CD8-positive, alpha-beta T cell (primary cell): ENCODE measurements at regions of chr1 and their contacts with region 1.

Region 1: DNA sequence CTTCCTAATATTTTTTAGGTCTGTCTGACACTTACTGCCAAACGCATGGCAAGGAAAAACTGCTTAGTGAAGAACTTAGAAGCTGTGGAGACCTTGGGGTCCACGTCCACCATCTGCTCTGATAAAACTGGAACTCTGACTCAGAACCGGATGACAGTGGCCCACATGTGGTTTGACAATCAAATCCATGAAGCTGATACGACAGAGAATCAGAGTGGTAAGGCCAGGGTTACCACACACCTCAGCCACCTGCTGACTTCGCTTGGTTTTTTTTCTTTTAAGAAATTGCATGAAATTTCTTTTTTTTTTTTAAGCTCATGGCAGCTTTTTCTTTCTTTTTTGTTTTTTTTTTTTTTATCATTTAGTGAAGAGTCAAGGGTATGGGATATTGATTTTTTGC is 17.2 kb downstream of the ATP1A1 start:
- DNase-seq: peak in 6 of 9 experiments; percentile 14 to 83 (median 49)
- ATAC-seq: peak; percentile 87
- H3K4me3 ChIP-seq: no peak overlapping the region
- H3K4me3 Mint-ChIP-seq: no peak overlapping the region
- H3K27ac ChIP-seq: peak overlapping the region in 1 of 2 experiments; percentile 34
- H3K27ac Mint-ChIP-seq: peak overlapping the region; percentile 72
- H3K4me1 ChIP-seq: peaks cover 13% of the 10 kb centered on the region
- H3K4me1 Mint-ChIP-seq: peaks cover 61% of the 10 kb centered on the region
- H3K27me3 ChIP-seq: no peaks in the 10 kb centered on the region
- H3K27me3 Mint-ChIP-seq: no peaks in the 10 kb centered on the region
- CTCF ChIP-seq: no peak

Region 2: GRCh38 chr1:116092752-116093482 is 297.3 kb before region 1 on chr1:
- CTCF ChIA-PET with region 1: no interaction called
- POLR2A ChIA-PET with region 1: no interaction called
- intact Hi-C with region 1: no loop called
- DNase-seq: no peak
- ATAC-seq: no peak
- H3K4me3 ChIP-seq: no peak overlapping the region
- H3K4me3 Mint-ChIP-seq: no peak overlapping the region
- H3K27ac ChIP-seq: no peak overlapping the region
- H3K27ac Mint-ChIP-seq: no peak overlapping the region
- H3K4me1 ChIP-seq: no peaks in the 10 kb centered on the region
- H3K4me1 Mint-ChIP-seq: no peaks in the 10 kb centered on the region
- H3K27me3 ChIP-seq: no peaks in the 10 kb centered on the region
- H3K27me3 Mint-ChIP-seq: peaks cover 25% of the 10 kb centered on the region
- CTCF ChIP-seq: no peak

Region 3: DNA sequence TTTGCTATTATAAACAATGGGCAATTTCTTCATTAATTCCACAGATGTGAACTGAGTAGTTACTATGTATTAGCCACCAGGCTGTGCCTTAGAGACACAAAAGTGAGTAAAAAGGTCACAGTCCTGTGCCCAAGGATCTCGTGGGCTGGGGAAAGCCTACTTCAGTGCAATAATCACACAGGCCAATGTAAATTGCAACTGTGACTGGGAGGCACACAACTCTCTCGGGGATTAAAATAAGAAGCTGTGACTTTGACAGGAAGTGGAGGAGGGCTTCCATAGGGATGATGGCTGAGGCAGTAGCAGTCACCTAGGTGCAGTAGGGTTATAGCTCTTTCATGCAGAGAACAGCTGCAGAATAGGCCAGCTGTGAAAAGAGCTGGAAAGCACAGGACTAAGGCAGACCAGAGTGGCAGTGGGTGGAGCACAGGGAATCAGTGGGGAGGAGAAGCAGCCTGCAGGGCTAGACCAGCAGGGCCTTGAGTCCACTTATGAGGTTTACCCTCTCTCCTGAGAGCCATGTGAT is 157.1 kb before region 1 on chr1:
- CTCF ChIA-PET with region 1: no interaction called
- POLR2A ChIA-PET with region 1: no interaction called
- intact Hi-C with region 1: loop called in 1 of 2 experiments (anchors 5 kb)
- DNase-seq: peak in 4 of 9 experiments; percentile 30 to 64 (median 51)
- ATAC-seq: peak; percentile 73
- H3K4me3 ChIP-seq: no peak overlapping the region
- H3K4me3 Mint-ChIP-seq: no peak overlapping the region
- H3K27ac ChIP-seq: no peak overlapping the region
- H3K27ac Mint-ChIP-seq: no peak overlapping the region
- H3K4me1 ChIP-seq: peaks cover 6% of the 10 kb centered on the region
- H3K4me1 Mint-ChIP-seq: peaks cover 11% of the 10 kb centered on the region
- H3K27me3 ChIP-seq: no peaks in the 10 kb centered on the region
- H3K27me3 Mint-ChIP-seq: no peaks in the 10 kb centered on the region
- CTCF ChIP-seq: peak; percentile 45

Region 4: DNA sequence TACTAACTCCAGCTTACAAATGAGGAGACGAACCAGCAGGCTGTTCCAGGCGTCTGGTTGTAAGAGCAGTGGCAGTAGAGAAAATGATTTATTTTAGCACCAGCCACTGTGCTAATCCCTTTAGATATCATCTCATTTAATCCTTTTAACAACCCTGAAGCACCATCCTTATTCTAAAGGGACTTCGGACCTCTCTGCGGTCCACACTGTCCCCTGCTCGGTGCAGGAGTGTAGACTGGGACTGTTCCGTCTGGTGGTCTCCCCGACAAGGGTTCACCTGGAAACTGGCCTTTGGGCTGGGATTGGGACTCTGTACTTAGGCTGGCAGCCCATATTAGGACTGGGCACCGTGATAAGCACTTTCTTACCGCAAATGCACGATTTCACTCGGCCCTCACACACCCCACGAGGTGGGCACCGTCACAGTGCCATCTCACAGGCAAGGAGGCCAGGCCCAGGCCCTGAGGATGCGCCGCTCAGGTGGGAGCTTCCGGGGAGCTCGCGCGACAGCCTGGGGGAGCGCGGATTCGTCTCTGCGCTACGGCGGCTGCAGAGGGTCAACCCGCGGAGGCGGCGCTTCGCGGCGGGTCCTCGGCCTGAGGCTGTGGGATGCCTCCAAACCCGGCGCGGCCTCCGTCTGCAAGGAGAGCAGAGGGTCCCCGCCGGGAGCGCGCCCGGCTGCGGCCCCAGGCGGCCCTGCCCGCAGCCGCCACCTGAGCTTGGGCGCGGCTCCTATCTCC is 28.1 kb after region 1 on chr1:
- CTCF ChIA-PET with region 1: interaction called, 3 read pairs
- POLR2A ChIA-PET with region 1: interaction called, 3 read pairs
- intact Hi-C with region 1: loop called in 1 of 2 experiments (anchors 2 kb)
- DNase-seq: peak; percentile 79 to 93 (median 87)
- ATAC-seq: peak; percentile 98
- H3K4me3 ChIP-seq: peak overlapping the region; percentile 81 to 83
- H3K4me3 Mint-ChIP-seq: peak overlapping the region; percentile 89
- H3K27ac ChIP-seq: peak overlapping the region; percentile 78 to 80
- H3K27ac Mint-ChIP-seq: peak overlapping the region; percentile 96
- H3K4me1 ChIP-seq: peaks cover 29% of the 10 kb centered on the region
- H3K4me1 Mint-ChIP-seq: peaks cover 35% of the 10 kb centered on the region
- H3K27me3 ChIP-seq: no peaks in the 10 kb centered on the region
- H3K27me3 Mint-ChIP-seq: no peaks in the 10 kb centered on the region
- CTCF ChIP-seq: no peak

Region 5: DNA sequence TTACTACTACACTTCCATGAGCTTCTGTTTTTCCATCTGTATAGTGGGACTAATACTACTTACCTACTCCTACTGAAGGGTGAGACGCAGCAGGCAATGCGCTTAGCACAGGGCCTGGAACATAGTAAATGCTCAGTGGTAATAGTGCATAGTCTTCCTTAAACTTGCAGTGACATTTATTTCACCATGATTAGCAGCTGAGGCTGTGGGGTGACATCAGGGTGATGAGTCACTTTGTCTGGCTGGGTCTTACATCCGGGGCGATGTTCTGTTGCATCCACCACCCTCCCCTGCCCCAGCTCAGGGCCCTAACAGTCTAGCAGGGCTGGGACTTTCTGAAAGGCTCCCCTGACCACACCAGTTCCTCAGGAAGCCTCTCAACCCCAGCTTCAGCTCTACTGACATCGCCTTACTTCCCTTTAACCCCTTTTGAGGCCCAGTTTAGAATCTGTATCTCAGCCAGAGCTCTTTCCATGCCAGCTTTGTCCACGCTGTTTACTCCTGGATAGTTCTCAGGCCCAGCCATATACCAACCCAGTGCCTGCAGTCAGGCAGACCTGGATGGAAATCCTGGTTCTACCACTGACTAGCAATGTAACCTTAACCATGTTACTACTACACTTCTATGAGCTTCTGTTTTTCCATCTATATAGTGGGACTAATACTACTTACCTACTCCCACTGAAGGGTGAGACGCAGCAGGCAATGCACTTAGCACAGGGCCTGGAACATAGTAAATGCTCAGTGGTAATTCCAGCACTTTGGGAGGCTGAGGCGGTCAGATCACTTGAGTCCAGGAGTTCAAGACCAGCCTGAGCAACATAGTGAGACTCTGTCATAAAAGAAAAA is 114.3 kb after region 1 on chr1:
- CTCF ChIA-PET with region 1: no interaction called
- POLR2A ChIA-PET with region 1: no interaction called
- intact Hi-C with region 1: no loop called
- DNase-seq: peak; percentile 71 to 97 (median 88)
- ATAC-seq: peak; percentile 93
- H3K4me3 ChIP-seq: no peak overlapping the region
- H3K4me3 Mint-ChIP-seq: peak overlapping the region; percentile 19
- H3K27ac ChIP-seq: peak overlapping the region; percentile 22 to 92
- H3K27ac Mint-ChIP-seq: peak overlapping the region; percentile 91
- H3K4me1 ChIP-seq: peaks cover 26% of the 10 kb centered on the region
- H3K4me1 Mint-ChIP-seq: peaks cover 42% of the 10 kb centered on the region
- H3K27me3 ChIP-seq: no peaks in the 10 kb centered on the region
- H3K27me3 Mint-ChIP-seq: no peaks in the 10 kb centered on the region
- CTCF ChIP-seq: no peak